MCF 10A (cell line): ENCODE measurements at regions of chr5 and their contacts with region 1.

Region 1: GRCh38 chr5:31935702-31936369 is 238.3 kb downstream of the GOLPH3 start:
- DNase-seq: peak; percentile 90
- H3K4me3 Mint-ChIP-seq: peak overlapping the region; percentile 90
- H3K27ac Mint-ChIP-seq: peak overlapping the region; percentile 87
- H3K4me1 Mint-ChIP-seq: peaks cover 35% of the 10 kb centered on the region
- H3K27me3 Mint-ChIP-seq: no peaks in the 10 kb centered on the region
- CTCF ChIP-seq: no peak

Region 2: DNA sequence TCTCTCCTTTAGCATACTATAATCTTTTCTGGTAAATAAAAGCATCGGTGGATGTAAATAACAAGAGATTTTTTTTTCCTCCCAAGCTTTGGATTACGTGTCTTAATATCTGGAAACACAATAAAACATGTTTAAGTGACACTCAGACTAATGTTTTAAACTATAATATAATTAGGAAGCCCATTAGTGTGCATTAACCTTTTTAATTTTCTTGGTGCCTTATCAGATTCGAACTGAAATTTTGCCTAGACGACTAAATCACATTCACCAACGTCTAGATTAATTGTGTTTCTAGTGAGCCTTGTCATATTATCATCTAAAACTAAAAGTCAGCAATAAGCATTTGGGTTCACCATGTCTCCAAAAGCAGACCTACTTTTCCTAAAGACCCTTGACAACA is 632.1 kb before region 1 on chr5:
- CTCF ChIA-PET with region 1: no interaction called
- POLR2A ChIA-PET with region 1: no interaction called
- intact Hi-C with region 1: no loop called
- DNase-seq: no peak
- H3K4me3 Mint-ChIP-seq: no peak overlapping the region
- H3K27ac Mint-ChIP-seq: no peak overlapping the region
- H3K4me1 Mint-ChIP-seq: no peaks in the 10 kb centered on the region
- H3K27me3 Mint-ChIP-seq: no peaks in the 10 kb centered on the region
- CTCF ChIP-seq: no peak

Region 3: DNA sequence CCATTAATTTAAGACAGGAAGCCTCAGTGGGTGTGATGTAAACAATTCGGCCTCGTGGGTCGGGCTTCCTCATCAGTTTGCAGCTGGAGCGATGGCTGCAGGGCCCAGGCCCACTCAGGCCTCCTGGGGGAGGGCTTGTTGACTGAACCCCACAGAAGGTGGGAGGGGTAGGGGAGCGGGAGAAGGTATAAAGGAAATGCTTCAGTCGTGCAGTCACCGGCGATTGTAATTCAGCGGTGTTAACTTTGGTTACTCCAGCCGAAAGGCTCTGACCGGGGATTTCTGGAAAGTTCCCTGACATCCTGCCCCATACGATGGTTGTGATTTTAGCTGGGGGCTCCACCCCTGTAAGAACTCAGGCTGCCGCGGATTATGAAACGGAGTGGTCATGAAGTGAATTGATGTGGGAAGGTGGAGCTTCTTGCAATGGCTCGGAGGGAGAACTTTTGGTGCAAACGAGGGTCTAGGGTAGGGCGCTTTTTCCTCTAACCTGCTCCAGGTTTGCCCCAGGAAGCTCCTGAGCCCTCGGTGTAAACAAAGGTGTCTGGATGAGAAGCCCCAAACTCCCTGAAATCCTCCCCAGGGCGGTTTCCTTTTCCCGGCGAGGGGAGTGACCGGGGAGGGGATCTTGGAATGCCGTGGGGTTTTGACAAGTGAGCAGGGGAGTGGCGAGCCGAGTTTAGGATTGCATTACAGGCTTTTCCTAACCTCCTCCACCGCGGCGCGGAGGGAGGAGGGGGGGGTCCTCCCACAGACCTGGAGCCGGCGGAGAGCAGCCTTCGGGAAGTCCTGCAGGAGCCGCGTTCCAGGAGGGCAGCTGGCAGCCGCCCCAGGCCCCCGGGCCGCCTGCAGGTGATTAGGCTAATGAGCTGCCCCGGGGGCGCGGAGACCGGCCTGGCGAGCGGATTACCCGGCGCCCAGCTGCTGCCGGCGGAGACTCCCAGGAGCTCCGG is 81.4 kb before region 1 on chr5:
- CTCF ChIA-PET with region 1: interaction called, 10 read pairs
- POLR2A ChIA-PET with region 1: interaction called, 29 read pairs
- intact Hi-C with region 1: no loop called
- DNase-seq: peak; percentile 69
- H3K4me3 Mint-ChIP-seq: peak overlapping the region; percentile 76
- H3K27ac Mint-ChIP-seq: peak overlapping the region; percentile 49
- H3K4me1 Mint-ChIP-seq: peaks cover 11% of the 10 kb centered on the region
- H3K27me3 Mint-ChIP-seq: no peaks in the 10 kb centered on the region
- CTCF ChIP-seq: no peak

Region 4: DNA sequence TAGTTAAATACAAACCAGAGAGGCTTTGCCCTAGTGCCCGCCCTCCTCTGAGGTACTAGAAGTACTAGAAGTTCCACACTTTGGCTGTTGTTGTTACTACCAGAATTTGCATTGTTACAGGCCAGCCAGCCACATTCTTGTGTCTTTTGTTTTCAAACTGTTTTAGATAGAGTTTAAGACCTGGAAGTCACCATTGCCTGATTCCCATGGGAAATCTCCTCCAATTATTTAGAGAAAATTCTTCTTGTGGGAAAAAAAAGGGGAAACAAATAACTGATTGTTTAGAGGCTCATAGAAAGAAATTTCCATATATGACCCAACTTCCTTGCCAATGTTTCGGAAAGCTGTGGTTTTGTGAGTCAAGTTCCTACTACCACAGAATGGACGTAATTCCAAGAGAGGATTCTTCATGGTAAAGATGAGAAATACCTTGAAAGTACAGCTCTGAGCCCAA is 14.0 kb before region 1 on chr5:
- CTCF ChIA-PET with region 1: interaction called, 12 read pairs
- POLR2A ChIA-PET with region 1: interaction called, 94 read pairs
- intact Hi-C with region 1: no loop called
- DNase-seq: peak; percentile 89
- H3K4me3 Mint-ChIP-seq: no peak overlapping the region
- H3K27ac Mint-ChIP-seq: peak overlapping the region; percentile 69
- H3K4me1 Mint-ChIP-seq: peaks cover 11% of the 10 kb centered on the region
- H3K27me3 Mint-ChIP-seq: no peaks in the 10 kb centered on the region
- CTCF ChIP-seq: no peak

Region 5: GRCh38 chr5:31987985-31988710 is 52.3 kb after region 1 on chr5:
- CTCF ChIA-PET with region 1: interaction called, 6 read pairs
- POLR2A ChIA-PET with region 1: interaction called, 10 read pairs
- intact Hi-C with region 1: loop called (anchors 1 kb)
- DNase-seq: peak; percentile 98
- H3K4me3 Mint-ChIP-seq: no peak overlapping the region
- H3K27ac Mint-ChIP-seq: peak overlapping the region; percentile 20
- H3K4me1 Mint-ChIP-seq: peaks cover 36% of the 10 kb centered on the region
- H3K27me3 Mint-ChIP-seq: no peaks in the 10 kb centered on the region
- CTCF ChIP-seq: no peak

Region 6: GRCh38 chr5:32044939-32045338 is 109.1 kb after region 1 on chr5:
- CTCF ChIA-PET with region 1: interaction called, 3 read pairs
- POLR2A ChIA-PET with region 1: interaction called, 14 read pairs
- intact Hi-C with region 1: no loop called
- DNase-seq: peak; percentile 27
- H3K4me3 Mint-ChIP-seq: no peak overlapping the region
- H3K27ac Mint-ChIP-seq: peak overlapping the region; percentile 49
- H3K4me1 Mint-ChIP-seq: peaks cover 24% of the 10 kb centered on the region
- H3K27me3 Mint-ChIP-seq: no peaks in the 10 kb centered on the region
- CTCF ChIP-seq: no peak

Region 7: DNA sequence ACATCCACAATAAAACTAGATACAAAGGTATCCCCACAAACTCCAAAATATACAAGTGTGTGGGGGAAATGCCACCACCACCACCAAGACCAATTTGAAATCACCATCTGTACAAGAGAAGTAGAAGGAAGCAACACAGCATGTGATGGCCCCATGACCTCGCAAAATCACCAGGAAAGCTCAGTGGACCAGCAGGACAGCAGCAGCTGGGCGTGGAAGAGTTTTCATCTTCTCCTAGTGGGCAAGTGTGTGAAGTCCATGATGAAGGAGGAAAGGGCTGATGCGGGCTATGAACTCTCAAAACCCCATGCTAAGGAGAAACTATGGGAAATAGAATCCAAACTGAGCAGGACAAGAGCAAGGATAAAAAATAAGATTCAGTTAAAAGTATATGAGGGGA is 180.1 kb after region 1 on chr5:
- CTCF ChIA-PET with region 1: no interaction called
- POLR2A ChIA-PET with region 1: no interaction called
- intact Hi-C with region 1: no loop called
- DNase-seq: no peak
- H3K4me3 Mint-ChIP-seq: no peak overlapping the region
- H3K27ac Mint-ChIP-seq: peak overlapping the region; percentile 52
- H3K4me1 Mint-ChIP-seq: peaks cover 11% of the 10 kb centered on the region
- H3K27me3 Mint-ChIP-seq: no peaks in the 10 kb centered on the region
- CTCF ChIP-seq: no peak